ENCODE measurements at regions of chr4 and their contacts with region 1.

Region 1: GRCh38 chr4:89024051-89024675 is 32.8 kb downstream of the FAM13A start:
- DNase-seq: peak; percentile 64 to 87 (median 75)
- ATAC-seq: peak; percentile 94
- H3K4me3 ChIP-seq: no peak overlapping the region
- H3K27ac ChIP-seq: peak overlapping the region in 2 of 4 donors; percentile 37 to 75
- H3K4me1 ChIP-seq: peaks cover 35% of the 10 kb centered on the region
- H3K27me3 ChIP-seq: no peaks in the 10 kb centered on the region
- CTCF ChIP-seq: peak; percentile 58 to 95 (median 89)
- POLR2A ChIP-seq: no peak

Region 2: DNA sequence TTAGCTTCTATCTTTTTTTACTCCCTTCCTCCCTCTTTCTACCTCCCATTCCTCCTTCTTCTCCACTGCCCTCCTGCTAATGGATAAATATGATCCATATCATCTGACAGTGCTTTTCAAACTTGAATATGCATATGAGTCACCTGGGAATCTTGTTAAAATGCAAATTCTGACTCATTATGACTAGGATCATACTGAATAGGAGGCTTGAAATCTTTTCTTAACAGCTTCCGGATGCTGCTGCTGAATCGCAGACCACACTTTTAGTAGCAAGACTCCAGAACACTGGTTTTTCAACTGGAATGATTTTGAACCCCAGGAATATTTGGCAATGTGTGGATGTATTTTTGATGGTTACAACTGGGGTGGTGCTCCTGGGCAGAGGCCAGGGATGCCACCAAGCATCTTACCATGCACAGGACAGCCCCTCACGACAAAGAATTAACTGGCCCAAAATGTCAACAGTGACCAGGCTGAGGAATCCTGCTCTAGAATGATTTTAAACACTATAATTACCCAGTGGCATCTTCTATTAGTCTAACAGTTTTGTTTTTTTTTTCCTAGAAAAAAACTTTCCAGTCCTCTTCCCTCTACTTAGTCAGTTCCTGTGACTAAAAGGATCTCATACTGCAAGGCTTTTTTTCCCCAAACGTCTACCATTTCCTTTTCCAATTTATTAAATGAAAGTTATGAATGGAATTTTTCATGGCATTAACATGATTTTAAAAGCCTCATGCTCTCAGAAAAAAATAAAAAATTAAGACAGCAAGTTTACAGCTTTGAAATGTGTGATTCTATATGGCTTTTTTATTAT is 490.0 kb before region 1 on chr4:
- intact Hi-C with region 1: loop called (anchors 10 kb)
- DNase-seq: no peak
- ATAC-seq: no peak
- H3K4me3 ChIP-seq: no peak overlapping the region
- H3K27ac ChIP-seq: no peak overlapping the region
- H3K4me1 ChIP-seq: peaks cover 1% of the 10 kb centered on the region
- H3K27me3 ChIP-seq: no peaks in the 10 kb centered on the region
- CTCF ChIP-seq: no peak
- POLR2A ChIP-seq: no peak

Region 3: DNA sequence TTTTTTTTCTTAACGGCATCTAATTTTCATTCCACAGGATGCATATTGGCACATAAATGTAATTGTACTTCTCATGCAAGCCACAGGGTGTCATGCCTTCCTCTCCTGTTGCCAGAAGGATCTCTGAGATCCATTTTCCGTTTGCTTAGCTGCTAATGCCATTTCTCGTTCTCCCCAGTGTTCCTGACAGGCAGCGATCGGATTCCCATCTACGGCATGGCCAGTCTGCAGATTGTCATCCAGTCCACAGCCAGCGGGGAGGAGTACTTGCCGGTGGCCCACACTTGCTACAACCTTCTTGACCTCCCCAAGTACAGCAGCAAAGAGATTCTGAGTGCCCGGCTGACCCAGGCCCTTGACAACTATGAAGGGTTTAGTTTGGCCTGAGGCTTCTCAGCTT is 317.6 kb before region 1 on chr4:
- intact Hi-C with region 1: loop called (anchors 10 kb)
- DNase-seq: peak; percentile 31 to 64 (median 51)
- ATAC-seq: peak; percentile 90
- H3K4me3 ChIP-seq: no peak overlapping the region
- H3K27ac ChIP-seq: no peak overlapping the region
- H3K4me1 ChIP-seq: peaks cover 5% of the 10 kb centered on the region
- H3K27me3 ChIP-seq: no peaks in the 10 kb centered on the region
- CTCF ChIP-seq: peak; percentile 42 to 84 (median 78)
- POLR2A ChIP-seq: no peak

Region 4: DNA sequence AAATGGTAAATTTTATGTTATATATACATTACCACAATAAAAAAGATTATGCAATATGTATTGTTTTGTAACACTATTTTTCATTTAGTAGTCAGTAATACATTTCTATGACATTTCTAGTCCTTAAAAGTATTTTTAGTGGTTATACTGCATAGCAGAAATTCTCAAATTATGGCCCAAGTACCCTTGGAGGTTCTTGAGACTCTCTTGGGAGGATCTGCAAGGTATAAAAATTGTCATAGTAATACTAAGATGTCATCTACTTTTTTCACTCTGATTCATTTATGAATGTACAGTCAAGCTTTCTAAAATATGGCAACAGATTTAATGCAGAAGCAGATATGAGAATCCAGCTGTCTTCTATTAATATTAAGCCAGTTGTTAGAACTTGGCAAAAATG is 187.9 kb before region 1 on chr4:
- intact Hi-C with region 1: no loop called
- DNase-seq: no peak
- ATAC-seq: no peak
- H3K4me3 ChIP-seq: no peak overlapping the region
- H3K27ac ChIP-seq: no peak overlapping the region
- H3K4me1 ChIP-seq: peaks cover 1% of the 10 kb centered on the region
- H3K27me3 ChIP-seq: no peaks in the 10 kb centered on the region
- CTCF ChIP-seq: no peak
- POLR2A ChIP-seq: no peak

Region 5: DNA sequence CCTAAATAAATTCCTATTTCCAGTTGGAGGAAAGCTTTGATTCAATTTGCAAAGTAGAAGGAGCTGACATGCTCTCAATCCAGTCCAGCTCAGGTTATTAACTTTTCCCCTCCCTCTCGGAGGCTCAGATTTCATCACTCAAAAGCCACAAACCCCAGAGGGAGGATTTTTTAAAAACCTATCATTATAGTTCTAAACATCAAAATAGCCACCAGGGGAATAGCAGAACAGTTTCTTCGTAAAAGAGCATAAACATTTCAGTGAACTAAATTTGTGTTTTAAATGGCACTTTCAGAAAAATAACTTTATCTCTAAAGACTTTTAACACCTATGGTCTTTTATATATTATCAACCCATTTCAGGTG is 274.6 kb after region 1 on chr4:
- intact Hi-C with region 1: no loop called
- DNase-seq: no peak
- ATAC-seq: no peak
- H3K4me3 ChIP-seq: peak overlapping the region in 1 of 2 donors; percentile 24
- H3K27ac ChIP-seq: peak overlapping the region; percentile 78 to 93 (median 92)
- H3K4me1 ChIP-seq: peaks cover 78% of the 10 kb centered on the region
- H3K27me3 ChIP-seq: no peaks in the 10 kb centered on the region
- CTCF ChIP-seq: peak in 3 of 7 experiments; percentile 18 to 28 (median 23)
- POLR2A ChIP-seq: no peak

Region 6: GRCh38 chr4:89579771-89580170 is 555.6 kb after region 1 on chr4:
- intact Hi-C with region 1: no loop called
- DNase-seq: no peak
- ATAC-seq: no peak
- H3K4me3 ChIP-seq: no peak overlapping the region
- H3K27ac ChIP-seq: no peak overlapping the region
- H3K4me1 ChIP-seq: no peaks in the 10 kb centered on the region
- H3K27me3 ChIP-seq: no peaks in the 10 kb centered on the region
- CTCF ChIP-seq: no peak
- POLR2A ChIP-seq: no peak

Measured in body of pancreas (tissue), 4 donors.